Heart left ventricle (tissue), 16 donors: ENCODE measurements at regions of chr16 and their contacts with region 1.

Region 1: GRCh38 chr16:57513371-57514102 is 22.8 kb downstream of the CCDC102A start:
- DNase-seq: no peak
- ATAC-seq: no peak
- H3K4me3 ChIP-seq: no peak overlapping the region
- H3K27ac ChIP-seq: peak overlapping the region in 1 of 12 donors; percentile 17
- H3K4me1 ChIP-seq: peaks cover 0 to 23% (median 7%) of the 10 kb centered on the region in 12 donors
- H3K27me3 ChIP-seq: no peaks in the 10 kb centered on the region
- CTCF ChIP-seq: no peak
- POLR2A ChIP-seq: no peak

Region 2: GRCh38 chr16:57462209-57462977 is 51.1 kb before region 1 on chr16 and contains the start of gene POLR2C:
- intact Hi-C with region 1: loop called in 3 of 10 experiments (anchors 2 to 5 kb)
- DNase-seq: peak; percentile 87 to 95 (median 90)
- ATAC-seq: peak; percentile 81 to 92 (median 89)
- H3K4me3 ChIP-seq: peak within 1 kb of the TSS; percentile 67 to 99 (median 88)
- H3K27ac ChIP-seq: peak within 1 kb of the TSS; percentile 54 to 93 (median 86)
- H3K4me1 ChIP-seq: peaks cover 0 to 32% (median 20%) of the 10 kb centered on the region in 12 donors
- H3K27me3 ChIP-seq: no peaks in the 10 kb centered on the region
- CTCF ChIP-seq: peak; percentile 90 to 99 (median 96)
- POLR2A ChIP-seq: peak in 1 of 2 donors; percentile 83
- total RNA-seq, gene POLR2C: 37.4 to 99.8 (median 48.7) TPM

Region 3: DNA sequence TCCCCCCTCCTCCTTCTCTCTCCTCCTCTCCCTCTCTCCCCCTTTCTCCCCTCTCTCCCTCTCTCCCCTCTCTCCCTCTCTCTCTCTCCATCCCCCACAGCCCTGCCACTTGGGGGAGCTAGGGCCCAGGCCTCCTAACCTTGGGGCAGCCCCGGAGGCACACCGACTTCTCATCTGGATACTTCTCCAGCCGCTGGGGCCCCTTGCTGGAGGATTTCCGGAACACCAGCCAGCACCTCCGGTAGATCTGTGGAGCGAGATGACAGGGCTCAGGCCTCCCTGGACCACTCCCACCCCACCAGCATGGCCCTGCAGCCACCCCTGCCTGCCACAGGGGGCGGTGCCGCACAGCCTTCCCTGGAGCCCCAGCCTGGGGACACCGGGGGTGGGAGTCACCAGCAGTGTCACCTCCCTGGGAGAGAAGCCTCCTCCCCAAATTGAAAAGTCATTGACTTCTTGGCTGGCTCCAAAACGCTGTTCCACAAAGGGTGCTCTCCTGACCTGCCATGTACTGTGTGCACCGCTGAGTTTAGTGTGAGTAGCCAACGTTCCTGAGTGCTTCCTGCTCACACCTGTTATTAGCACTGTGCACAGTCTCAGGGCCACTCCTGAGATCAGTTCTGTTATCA is 37.7 kb before region 1 on chr16:
- intact Hi-C with region 1: loop called in 8 of 10 experiments (anchors 5 kb)
- DNase-seq: no peak
- ATAC-seq: peak in 3 of 4 donors; percentile 32 to 66 (median 46)
- H3K4me3 ChIP-seq: no peak overlapping the region
- H3K27ac ChIP-seq: peak overlapping the region in 1 of 12 donors; percentile 5
- H3K4me1 ChIP-seq: peaks cover 5 to 64% (median 40%) of the 10 kb centered on the region in 12 donors
- H3K27me3 ChIP-seq: peaks cover 0 to 6% (median 0%) of the 10 kb centered on the region in 9 donors
- CTCF ChIP-seq: peak; percentile 18 to 65 (median 54)
- POLR2A ChIP-seq: no peak